ENCODE measurements at regions of chr22 and their contacts with region 1.

Region 1: DNA sequence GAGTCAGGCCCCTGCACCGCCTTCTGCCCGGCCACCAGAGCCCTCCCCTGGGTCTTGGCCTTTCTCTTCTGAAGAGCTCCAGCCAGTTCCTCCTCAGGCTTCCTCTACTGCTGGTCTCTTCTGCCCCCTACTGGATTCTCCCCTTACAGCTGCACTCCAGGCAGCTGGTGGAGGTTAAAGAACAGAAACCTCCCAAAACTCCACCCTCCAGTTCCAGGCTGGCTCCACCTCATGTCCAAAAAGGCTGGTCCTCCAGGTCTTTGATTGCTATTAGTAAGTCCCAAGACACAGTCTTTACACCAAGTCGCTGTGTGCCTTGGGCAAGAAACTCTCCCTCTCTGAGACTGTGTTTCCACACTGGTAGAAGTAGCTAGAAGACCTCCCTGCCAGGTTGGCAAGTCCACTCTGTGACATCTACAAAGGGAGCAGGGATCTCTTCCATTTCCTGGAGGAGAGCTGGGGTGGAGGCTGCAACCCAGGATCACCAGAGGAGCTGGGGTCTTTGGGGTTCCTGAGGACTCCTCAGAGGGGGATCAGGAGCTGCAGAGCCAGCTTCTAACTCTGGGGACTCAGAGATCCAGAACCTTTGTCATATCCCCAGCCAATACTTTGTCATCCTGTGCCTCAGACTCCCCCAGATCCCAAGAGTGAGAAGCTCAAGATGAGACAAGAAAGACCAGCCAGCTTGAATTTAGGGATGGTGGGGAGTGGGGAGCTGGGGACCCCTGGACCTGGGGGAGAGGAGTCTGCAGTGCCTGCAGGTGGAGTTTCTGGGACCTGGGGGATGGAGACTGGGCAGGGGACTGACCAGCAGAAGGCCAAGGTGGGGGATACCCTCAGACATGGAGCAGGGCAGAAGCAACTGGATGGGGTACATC is 3.4 kb upstream of the IGLL5 start:
- DNase-seq: peak; percentile 61 to 82 (median 73)
- H3K4me3 ChIP-seq: no peak overlapping the region
- H3K27ac ChIP-seq: no peak overlapping the region
- H3K4me1 ChIP-seq: no peaks in the 10 kb centered on the region
- H3K27me3 ChIP-seq: no peaks in the 10 kb centered on the region
- CTCF ChIP-seq: peak; percentile 43 to 76 (median 72)
- POLR2A ChIP-seq: no peak

Region 2: DNA sequence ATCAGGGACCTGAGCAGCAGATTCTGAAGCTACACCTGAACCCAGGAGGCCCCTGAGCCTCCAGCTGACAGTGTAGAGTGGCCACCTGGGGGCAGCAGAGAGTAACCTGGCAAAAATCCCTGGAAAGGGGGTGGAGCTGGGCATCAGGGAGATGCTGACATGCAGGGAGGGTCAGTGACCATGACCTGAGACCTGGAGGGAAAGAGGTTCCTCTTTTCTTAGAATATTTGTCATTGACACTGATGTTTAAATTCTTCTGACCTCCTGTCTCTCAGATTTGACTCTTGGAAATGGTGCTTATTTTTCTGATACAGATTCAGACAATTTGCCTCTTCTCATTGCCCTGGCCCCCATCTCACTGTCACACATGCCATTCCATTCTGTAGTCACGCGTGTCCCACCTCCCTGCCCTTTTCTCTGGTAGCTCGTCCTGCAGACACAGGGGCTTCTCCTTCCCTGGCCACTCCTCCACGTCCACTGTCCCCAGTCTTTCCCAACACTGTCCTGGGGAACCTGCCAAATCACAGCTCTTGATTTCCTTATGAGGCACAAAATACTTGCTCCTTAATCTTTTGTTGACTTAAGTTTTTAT is 113.9 kb before region 1 on chr22:
- intact Hi-C with region 1: loop called in 1 of 2 experiments (anchors 10 kb)
- DNase-seq: peak; percentile 51 to 75 (median 58)
- H3K4me3 ChIP-seq: no peak overlapping the region
- H3K27ac ChIP-seq: no peak overlapping the region
- H3K4me1 ChIP-seq: no peaks in the 10 kb centered on the region
- H3K27me3 ChIP-seq: no peaks in the 10 kb centered on the region
- CTCF ChIP-seq: peak; percentile 46 to 74 (median 55)
- POLR2A ChIP-seq: no peak

Region 3: DNA sequence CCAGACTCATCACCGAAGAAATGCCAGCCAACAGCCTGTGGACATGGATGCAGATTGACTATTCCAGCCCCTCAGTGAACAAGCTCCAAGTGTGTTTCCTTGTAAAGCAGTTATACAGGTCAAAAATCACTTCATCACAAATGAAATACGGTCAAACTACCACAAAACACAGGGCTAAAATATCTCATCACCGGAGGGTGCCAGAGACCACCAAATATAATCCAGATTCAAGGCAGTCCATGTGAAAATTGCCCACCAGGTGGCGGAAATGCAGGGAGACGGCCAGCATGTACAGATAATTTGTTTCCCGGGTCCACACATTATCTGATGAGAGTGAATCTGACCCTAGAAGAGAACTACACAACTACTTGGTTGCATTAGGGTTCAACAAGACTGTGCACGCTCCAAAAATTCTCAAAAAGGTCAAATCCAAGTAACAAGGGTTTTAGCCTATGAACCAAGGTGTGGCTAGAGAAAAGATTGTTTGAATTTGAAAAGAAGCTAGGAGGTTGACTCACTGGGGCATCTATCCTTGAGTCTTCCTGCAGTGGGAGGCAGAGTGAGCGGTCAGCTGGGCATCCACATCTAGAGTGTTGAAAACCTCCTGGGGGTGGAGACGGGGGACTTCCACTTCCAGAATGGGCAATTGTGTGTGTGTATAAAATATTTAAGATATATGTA is 75.0 kb after region 1 on chr22:
- intact Hi-C with region 1: no loop called
- DNase-seq: peak; percentile 78 to 92 (median 86)
- H3K4me3 ChIP-seq: no peak overlapping the region
- H3K27ac ChIP-seq: no peak overlapping the region
- H3K4me1 ChIP-seq: no peaks in the 10 kb centered on the region
- H3K27me3 ChIP-seq: peaks cover 4% of the 10 kb centered on the region
- CTCF ChIP-seq: peak; percentile 89 to 100 (median 99)
- POLR2A ChIP-seq: no peak

Region 4: DNA sequence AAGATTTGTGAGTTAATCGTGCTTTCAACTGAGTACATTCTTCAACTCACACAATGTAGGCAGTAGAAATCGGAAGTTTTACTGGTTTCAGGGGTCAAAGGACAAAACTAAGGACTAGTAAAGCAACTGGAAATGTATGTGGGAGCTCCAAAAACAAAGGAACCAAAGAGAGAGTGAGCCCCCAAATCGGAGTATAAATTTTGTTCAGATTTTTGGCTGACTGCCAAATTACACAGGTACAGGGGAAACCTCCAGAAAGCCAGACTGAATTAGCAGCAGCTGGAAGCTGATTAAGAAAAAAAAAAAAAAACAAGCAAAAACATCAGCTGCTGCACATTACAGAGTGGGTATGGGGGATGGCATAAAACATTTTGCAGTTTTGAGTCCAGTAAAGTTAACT is 110.9 kb after region 1 on chr22:
- intact Hi-C with region 1: no loop called
- DNase-seq: no peak
- H3K4me3 ChIP-seq: no peak overlapping the region
- H3K27ac ChIP-seq: no peak overlapping the region
- H3K4me1 ChIP-seq: no peaks in the 10 kb centered on the region
- H3K27me3 ChIP-seq: no peaks in the 10 kb centered on the region
- CTCF ChIP-seq: no peak
- POLR2A ChIP-seq: no peak

Measured in adrenal gland (tissue), 19 donors.